Activated naive CD4-positive, alpha-beta T cell treated with anti-CD3 and anti-CD28 coated beads for 36 hours (primary cell): ENCODE measurements at regions of chr2 and their contacts with region 1.

Region 1: DNA sequence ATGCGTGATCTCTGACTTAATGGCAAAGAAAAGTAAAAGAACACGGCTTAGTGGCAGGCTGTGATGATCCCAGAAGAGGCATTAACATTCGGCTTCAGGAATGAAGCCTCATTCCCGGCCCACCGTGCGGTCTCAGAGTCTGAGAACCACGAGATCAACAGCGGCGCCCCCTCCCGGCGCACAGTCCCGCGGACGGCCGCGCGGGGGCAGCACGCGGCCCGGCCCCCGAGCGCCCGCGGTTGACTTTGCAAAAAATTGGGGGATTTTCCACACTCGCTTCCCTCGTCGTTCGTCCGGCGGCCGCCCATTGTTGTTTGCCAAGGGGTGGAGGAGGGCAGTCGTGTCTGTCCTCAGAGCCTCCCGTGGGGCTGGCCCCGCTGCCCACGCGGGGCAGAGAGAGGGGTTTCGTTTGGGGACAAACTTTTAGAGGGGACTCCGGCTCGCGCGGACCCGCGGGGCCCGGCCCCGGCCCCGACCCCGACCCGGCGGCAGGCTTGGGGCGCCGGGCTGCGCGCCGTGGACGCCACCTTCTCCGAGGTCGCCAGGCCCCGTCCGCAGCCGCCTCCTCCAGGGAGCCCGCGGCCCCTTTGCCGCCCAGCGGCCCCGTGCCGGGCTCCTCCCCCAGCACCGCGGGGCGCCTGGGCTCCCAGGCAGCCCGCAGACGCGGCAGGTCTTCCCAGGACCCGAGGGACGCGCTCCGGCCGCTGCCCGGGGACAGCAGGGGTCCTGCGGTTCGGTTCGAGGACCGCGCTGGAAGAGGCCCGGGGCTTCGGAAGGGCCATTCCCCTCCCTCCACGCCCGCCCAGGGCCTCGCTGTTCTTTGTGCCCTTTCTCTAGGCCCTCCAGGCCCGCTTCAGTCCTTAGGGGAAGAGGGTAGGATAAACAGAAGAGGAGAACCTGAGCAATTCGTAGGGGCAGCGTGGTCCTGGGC is 3.4 kb upstream of the HS6ST1 start:
- DNase-seq: peak; percentile 84
- H3K4me3 Mint-ChIP-seq: peak overlapping the region; percentile 52
- H3K27ac Mint-ChIP-seq: no peak overlapping the region
- H3K4me1 Mint-ChIP-seq: peaks cover 11% of the 10 kb centered on the region
- H3K27me3 Mint-ChIP-seq: no peaks in the 10 kb centered on the region

Region 2: GRCh38 chr2:127884436-127885345 is 437.4 kb before region 1 on chr2:
- CTCF ChIA-PET with region 1: no interaction called
- intact Hi-C with region 1: loop called (anchors 5 kb)
- DNase-seq: no peak
- H3K4me3 Mint-ChIP-seq: peak overlapping the region; percentile 86
- H3K27ac Mint-ChIP-seq: peak overlapping the region; percentile 71
- H3K4me1 Mint-ChIP-seq: peaks cover 60% of the 10 kb centered on the region
- H3K27me3 Mint-ChIP-seq: no peaks in the 10 kb centered on the region

Region 3: DNA sequence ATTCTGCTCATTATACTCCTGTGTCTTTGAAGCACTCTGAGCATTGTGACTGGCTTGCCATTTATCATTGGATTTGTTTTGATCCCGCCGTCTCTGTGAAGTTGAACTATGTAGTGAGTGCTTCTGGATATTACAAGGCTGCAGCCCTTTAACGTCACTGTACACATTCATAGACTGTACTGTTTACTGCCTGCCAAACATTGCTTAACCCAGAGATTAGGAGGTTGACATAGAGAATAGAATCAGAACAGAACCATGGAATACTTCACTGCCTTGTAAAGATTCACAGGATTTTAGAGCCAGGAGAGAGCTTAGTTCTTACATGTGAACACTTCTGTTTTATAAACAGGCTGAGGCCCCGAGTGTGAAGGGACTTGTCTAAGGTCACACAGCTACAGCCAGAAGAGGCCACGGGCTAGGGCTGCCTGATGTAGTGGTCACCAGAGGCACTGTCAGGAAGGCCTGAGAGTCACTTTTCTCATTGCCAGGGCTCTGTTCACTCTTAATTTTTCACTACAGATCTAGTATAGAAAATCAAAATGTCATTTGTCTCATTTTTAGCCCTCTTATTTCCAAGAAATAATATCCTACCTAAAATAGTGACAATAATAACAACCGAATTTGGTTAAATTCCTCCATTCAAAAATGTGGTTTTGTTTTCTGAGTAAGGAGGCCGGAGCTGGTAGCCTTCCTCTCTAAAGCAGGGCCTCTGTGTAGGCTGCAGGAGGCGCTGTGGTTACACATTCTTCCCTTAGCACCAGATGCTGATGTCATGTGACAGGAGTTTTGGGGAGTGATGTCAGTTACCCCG is 143.2 kb before region 1 on chr2:
- CTCF ChIA-PET with region 1: no interaction called
- intact Hi-C with region 1: loop called (anchors 10 kb)
- DNase-seq: peak; percentile 70
- H3K4me3 Mint-ChIP-seq: no peak overlapping the region
- H3K27ac Mint-ChIP-seq: no peak overlapping the region
- H3K4me1 Mint-ChIP-seq: no peaks in the 10 kb centered on the region
- H3K27me3 Mint-ChIP-seq: no peaks in the 10 kb centered on the region

Region 4: GRCh38 chr2:128503804-128504652 is 182.0 kb after region 1 on chr2:
- CTCF ChIA-PET with region 1: no interaction called
- intact Hi-C with region 1: no loop called
- DNase-seq: no peak
- H3K4me3 Mint-ChIP-seq: no peak overlapping the region
- H3K27ac Mint-ChIP-seq: no peak overlapping the region
- H3K4me1 Mint-ChIP-seq: no peaks in the 10 kb centered on the region
- H3K27me3 Mint-ChIP-seq: peaks cover 3% of the 10 kb centered on the region

Region 5: DNA sequence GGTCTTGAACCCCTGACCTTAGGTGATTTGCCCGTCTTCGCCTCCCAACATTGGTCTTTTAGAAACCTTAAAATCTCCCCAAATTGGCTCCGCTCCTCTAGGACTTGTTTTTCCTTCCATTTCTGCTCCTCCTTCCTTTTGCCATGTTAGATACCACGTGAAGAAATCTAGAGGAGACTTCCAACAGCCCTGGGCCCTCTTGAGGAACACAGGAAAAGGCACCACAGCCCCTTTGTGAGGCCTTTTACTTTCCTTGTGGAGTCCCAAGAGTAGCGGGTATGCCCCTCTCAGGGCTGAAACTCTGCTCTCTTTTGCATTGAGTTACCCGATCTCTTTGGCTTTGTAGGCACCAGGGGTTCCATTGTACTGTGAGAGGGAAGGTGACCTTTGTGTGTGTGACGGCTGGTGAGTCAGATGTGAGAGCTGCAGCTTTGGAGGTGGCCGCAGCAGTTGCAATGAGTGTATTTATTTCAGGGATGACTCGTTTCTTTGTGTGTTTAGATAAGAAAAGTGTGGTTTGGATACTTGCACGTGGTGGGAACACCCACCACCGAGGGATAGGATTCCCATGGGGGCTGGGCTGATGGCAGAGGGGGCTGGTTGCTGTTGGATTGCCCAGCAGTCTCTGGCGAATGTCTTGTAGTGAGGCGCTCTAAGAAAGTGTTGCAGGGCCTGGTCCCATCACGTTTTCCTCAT is 215.0 kb after region 1 on chr2:
- CTCF ChIA-PET with region 1: no interaction called
- intact Hi-C with region 1: loop called (anchors 2 kb)
- DNase-seq: peak; percentile 21
- H3K4me3 Mint-ChIP-seq: no peak overlapping the region
- H3K27ac Mint-ChIP-seq: no peak overlapping the region
- H3K4me1 Mint-ChIP-seq: no peaks in the 10 kb centered on the region
- H3K27me3 Mint-ChIP-seq: peaks cover 8% of the 10 kb centered on the region

Region 6: GRCh38 chr2:129849559-129850160 is 1527.6 kb after region 1 on chr2:
- CTCF ChIA-PET with region 1: no interaction called
- intact Hi-C with region 1: loop called (anchors 2 kb)
- DNase-seq: no peak
- H3K4me3 Mint-ChIP-seq: no peak overlapping the region
- H3K27ac Mint-ChIP-seq: no peak overlapping the region
- H3K4me1 Mint-ChIP-seq: no peaks in the 10 kb centered on the region
- H3K27me3 Mint-ChIP-seq: peaks cover 20% of the 10 kb centered on the region